Activated naive CD4-positive, alpha-beta T cell treated with anti-CD3 and anti-CD28 coated beads for 36 hours (primary cell): ENCODE measurements at regions of chr14 and their contacts with region 1.

Region 1: DNA sequence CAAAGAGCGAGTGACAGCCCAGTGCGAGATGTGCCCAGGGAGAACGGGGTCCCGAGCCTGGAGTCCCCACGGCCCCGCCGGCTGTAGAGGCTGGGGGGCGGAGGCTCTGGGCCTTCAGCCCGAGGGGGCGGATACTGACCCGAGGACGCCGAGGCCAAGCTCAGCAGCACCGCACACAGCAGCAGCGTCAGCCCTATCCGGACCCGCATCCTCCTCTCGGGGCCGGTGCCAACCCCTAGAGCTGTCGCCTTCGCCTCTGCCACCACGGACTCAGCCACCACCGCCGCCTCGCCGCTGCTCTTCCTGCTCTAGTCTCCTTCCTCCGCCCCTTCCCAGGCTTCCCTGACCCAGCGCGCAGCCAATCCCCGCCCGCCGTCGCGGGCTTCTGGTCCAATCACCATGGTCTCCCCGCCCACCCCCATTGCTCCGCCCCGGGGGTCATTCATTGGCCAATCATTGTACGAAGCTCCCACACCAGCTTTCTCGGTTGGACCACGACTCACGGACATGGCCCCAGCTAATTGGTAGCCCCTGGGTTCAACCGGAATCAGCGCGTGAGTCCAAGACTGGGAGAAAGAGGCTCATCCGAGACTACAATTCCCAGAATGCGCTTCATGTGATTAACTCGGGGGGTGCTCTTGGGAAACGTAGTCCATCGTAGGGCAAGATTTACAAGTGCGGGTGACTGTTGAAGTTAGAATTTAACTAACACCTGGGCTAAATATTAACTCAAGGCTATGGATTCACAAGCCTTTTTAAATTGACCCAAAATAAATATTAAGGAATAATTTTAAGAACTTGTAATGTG is at the start of gene SEL1L:
- DNase-seq: peak; percentile 100
- H3K4me3 Mint-ChIP-seq: peak within 1 kb of the TSS; percentile 88
- H3K27ac Mint-ChIP-seq: peak within 1 kb of the TSS; percentile 79
- H3K4me1 Mint-ChIP-seq: peaks cover 52% of the 10 kb centered on the region
- H3K27me3 Mint-ChIP-seq: no peaks in the 10 kb centered on the region
- total RNA-seq, gene SEL1L: 40.5 to 41.2 TPM

Region 2: DNA sequence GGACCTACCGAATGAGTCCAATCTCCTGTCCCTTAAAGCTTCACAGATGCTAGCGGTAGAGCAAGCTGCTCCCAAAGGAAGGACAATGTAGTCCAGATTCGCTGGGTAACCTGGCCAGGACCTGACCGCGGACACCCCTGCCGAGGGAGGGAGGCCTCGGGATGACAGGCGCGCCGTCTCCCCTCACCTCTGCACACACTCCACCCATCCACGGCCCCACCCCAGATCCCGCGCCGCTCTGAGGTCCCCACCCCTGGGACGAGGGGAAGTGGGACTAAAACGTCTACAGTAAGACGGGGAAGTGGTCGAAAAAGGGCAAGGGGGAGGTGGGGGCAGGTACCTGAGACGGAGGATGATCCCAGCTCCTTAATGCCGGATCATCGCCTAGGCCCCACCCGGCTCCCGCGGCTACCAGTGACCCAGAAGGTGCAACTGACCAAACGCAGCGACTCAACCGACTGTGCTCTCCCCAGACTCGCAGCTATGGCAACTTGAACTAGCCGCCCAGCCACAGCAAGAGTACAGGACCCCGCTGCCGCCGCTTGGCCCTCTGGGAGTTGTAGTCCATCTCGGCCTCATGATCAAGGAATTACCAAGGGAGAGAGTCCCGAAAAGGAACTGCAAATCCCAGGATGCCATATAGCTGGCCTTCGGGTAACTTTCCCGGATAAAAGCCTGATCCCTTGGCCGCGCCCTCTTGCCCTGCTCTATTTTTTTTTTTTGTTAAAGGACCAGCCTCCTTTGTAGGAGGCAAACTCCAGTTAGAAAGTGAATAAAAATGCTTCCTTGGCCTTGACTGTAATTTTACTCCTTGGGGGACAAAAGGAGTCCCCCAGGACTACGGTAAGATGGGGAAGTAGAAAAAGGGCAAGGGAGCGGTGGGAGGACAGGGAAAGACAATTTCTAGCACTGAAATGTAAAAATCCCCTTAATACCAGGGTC is 592.2 kb before region 1 on chr14 and contains the start of gene CEP128:
- CTCF ChIA-PET with region 1: no interaction called
- intact Hi-C with region 1: loop called (anchors 2 kb)
- DNase-seq: peak; percentile 90
- H3K4me3 Mint-ChIP-seq: peak within 1 kb of the TSS; percentile 86
- H3K27ac Mint-ChIP-seq: peak within 1 kb of the TSS; percentile 88
- H3K4me1 Mint-ChIP-seq: peaks cover 38% of the 10 kb centered on the region
- H3K27me3 Mint-ChIP-seq: no peaks in the 10 kb centered on the region
- total RNA-seq, gene CEP128: 16.4 to 17.1 TPM

Region 3: GRCh38 chr14:81506487-81506886 is 27.3 kb before region 1 on chr14:
- CTCF ChIA-PET with region 1: no interaction called
- intact Hi-C with region 1: no loop called
- DNase-seq: no peak
- H3K4me3 Mint-ChIP-seq: no peak overlapping the region
- H3K27ac Mint-ChIP-seq: no peak overlapping the region
- H3K4me1 Mint-ChIP-seq: peaks cover 21% of the 10 kb centered on the region
- H3K27me3 Mint-ChIP-seq: no peaks in the 10 kb centered on the region

Region 4: GRCh38 chr14:81519200-81520011 is 14.3 kb before region 1 on chr14:
- CTCF ChIA-PET with region 1: no interaction called
- intact Hi-C with region 1: loop called (anchors 1 kb)
- DNase-seq: peak; percentile 35
- H3K4me3 Mint-ChIP-seq: no peak overlapping the region
- H3K27ac Mint-ChIP-seq: peak overlapping the region; percentile 73
- H3K4me1 Mint-ChIP-seq: peaks cover 42% of the 10 kb centered on the region
- H3K27me3 Mint-ChIP-seq: no peaks in the 10 kb centered on the region

Region 5: DNA sequence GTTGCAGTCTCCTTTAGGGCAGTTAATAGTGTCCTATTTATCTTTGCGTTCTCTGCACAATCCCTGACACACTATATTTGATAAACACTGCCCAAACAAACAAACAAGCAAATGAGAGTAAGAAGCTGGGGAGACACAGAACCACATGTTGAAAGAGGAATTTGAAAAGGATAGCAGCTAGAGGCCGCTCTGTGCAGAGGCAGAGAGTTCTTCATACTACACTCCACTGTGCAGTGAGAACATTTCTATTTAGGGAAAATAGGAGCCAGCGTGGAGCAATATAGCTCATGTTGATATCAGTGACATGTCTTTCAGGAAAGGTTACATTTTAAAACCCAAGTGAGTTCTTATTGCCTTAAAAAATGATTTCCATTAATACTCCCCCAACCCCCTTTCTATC is 140.2 kb after region 1 on chr14:
- CTCF ChIA-PET with region 1: no interaction called
- intact Hi-C with region 1: no loop called
- DNase-seq: no peak
- H3K4me3 Mint-ChIP-seq: no peak overlapping the region
- H3K27ac Mint-ChIP-seq: no peak overlapping the region
- H3K4me1 Mint-ChIP-seq: no peaks in the 10 kb centered on the region
- H3K27me3 Mint-ChIP-seq: peaks cover under 1% of the 10 kb centered on the region